ENCODE measurements at regions of chr17 and their contacts with region 1.

Region 1: GRCh38 chr17:37358830-37359681 is 16.7 kb upstream of the C17orf78 start:
- DNase-seq: peak; percentile 87
- H3K4me3 ChIP-seq: peak overlapping the region; percentile 81 to 87
- H3K27ac ChIP-seq: peak overlapping the region; percentile 92 to 94
- H3K4me1 ChIP-seq: no peaks in the 10 kb centered on the region
- H3K27me3 ChIP-seq: no peaks in the 10 kb centered on the region
- CTCF ChIP-seq: peak; percentile 25 to 59 (median 50)
- POLR2A ChIP-seq: peak; percentile 59

Region 2: DNA sequence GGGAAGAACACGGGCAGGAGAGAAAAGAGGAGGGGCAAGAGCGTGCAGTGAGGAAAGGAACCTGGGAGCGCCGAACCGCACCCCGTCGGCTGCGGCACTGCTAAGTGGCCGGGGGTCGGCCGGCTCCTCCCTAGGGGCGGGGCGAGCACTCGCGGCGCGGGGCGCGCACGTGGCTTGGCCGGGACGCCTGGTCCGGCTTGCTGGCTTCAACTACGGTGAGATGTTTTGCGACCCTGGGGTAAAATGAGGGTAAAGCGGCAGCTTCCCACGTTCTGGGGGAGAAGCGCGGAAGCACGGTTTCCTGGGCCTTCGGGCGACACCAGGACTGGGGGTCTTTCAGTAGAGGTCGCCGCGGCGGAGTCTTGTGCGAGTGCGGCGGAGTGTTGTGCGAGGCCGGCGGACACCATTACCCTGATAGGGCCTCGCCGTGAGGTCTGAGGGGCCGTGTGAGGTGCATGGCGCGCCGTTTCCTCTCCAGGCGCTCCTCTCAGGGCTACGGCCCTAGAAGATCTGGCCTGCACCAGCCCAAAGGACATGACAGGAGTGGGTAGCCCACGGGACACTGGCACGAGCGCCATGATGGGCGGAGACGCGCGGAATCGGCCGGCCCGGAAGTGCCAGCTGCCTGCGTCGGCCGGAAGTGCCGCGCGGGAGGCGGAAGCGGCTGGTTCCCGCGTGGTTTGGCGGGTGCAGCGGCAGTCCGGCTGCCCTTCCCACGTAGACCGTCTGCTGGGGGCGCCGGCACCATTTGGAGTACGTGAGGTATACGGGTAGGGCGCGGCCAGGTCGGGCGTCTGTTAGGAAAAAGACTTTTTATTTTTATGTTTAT is 824.0 kb before region 1 on chr17 and contains the starts of genes MYO19 and PIGW:
- intact Hi-C with region 1: loop called (anchors 10 kb)
- DNase-seq: peak; percentile 77
- H3K4me3 ChIP-seq: peak within 1 kb of the TSS; percentile 80 to 85
- H3K27ac ChIP-seq: peak within 1 kb of the TSS; percentile 91 to 95
- H3K4me1 ChIP-seq: peaks cover 5% of the 10 kb centered on the region
- H3K27me3 ChIP-seq: no peaks in the 10 kb centered on the region
- CTCF ChIP-seq: peak in 2 of 4 experiments; percentile 18 to 28
- POLR2A ChIP-seq: peak; percentile 61
- total RNA-seq, gene MYO19: 49.4 to 56.4 TPM
- total RNA-seq, gene PIGW: 6.4 to 7.1 TPM

Region 3: GRCh38 chr17:37301288-37301687 is 57.8 kb before region 1 on chr17:
- intact Hi-C with region 1: loop called (anchors 5 kb)
- DNase-seq: peak; percentile 17
- H3K4me3 ChIP-seq: no peak overlapping the region
- H3K27ac ChIP-seq: peak overlapping the region; percentile 58 to 75
- H3K4me1 ChIP-seq: peaks cover 7% of the 10 kb centered on the region
- H3K27me3 ChIP-seq: no peaks in the 10 kb centered on the region
- CTCF ChIP-seq: no peak
- POLR2A ChIP-seq: no peak